Dendritic cell treated with granulocyte-macrophage colony-stimulating factor and Interleukin-4, amounts not matched to agents 40 ng/mL and 50 ng/mL, for 4 days (primary cell): ENCODE measurements at regions of chr9 and their contacts with region 1.

Region 1: GRCh38 chr9:121604242-121604641 is 47.2 kb upstream of the DAB2IP start:
- H3K4me3 Mint-ChIP-seq: no peak overlapping the region
- H3K27ac Mint-ChIP-seq: peak overlapping the region; percentile 71
- H3K4me1 Mint-ChIP-seq: peaks cover 69% of the 10 kb centered on the region
- H3K27me3 Mint-ChIP-seq: peaks cover 47% of the 10 kb centered on the region

Region 2: DNA sequence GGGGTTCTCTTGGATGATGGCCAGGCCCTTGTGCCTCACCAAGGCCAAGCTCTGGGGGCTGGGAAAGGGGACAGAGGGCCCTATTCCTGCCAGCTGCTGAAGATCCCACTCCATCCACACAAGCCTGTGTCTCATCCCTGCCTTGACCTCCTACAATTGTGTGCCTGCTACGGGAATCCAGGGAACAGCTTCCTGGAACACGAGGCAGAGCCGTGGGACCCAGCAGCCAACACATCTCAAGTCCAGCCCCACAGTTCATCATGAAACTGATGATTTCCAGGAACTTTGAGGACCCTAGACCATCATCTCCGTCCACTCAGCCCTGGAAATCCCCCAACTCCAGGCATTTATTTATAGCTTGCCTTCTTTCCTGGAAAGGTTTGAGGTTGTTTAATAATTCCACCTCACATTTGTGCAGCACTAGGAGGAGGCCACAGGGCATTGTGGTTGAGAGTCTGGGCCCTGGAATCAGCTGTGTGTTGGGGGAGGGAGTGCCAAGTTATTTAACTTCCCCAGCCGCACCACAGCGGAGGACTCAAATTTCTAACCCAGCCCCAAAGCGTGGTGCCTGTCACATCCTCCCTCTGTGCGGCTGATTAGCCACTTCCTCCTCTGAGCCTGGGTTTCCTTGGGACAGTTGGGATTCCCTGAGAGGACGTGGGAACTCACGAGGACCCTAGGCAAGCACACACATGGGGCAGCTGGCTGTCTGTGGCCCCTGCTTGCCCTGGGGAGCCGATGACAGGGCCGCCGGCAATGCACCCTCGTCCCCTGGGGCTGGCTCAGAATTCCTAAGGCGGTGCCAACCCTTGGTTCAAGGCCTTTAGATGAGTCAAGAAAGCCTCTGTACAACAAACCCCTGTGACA is 46.4 kb before region 1 on chr9:
- intact Hi-C with region 1: loop called (anchors 5 kb)
- H3K4me3 Mint-ChIP-seq: peak overlapping the region; percentile 6
- H3K27ac Mint-ChIP-seq: peak overlapping the region; percentile 76
- H3K4me1 Mint-ChIP-seq: peaks cover 49% of the 10 kb centered on the region
- H3K27me3 Mint-ChIP-seq: peaks cover 21% of the 10 kb centered on the region